CD8-positive, alpha-beta memory T cell (primary cell): ENCODE measurements at regions of chr12 and their contacts with region 1.

Region 1: DNA sequence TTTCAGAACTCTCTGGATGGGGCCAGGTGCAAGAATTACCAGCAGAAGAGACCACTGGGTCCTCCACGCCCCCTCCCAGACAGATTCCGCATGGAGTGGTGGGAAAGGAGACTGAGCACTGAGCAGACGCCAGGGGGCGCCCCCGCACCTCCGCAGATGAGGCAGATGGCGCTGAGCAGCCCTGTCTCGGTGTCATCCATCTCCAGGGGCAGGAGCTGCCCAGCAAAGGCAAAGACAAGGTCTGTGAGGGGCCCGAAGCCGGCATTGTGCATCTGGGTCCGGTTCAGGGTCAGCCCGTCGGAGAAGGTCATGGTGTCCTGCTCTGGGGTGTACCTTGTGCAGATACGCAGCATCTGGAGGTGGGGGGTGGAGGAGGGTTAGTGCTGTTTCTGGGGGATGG is 6.3 kb upstream of the ITGB7 start:
- DNase-seq: peak; percentile 75 to 87 (median 80)
- H3K4me3 ChIP-seq: no peak overlapping the region
- H3K4me3 Mint-ChIP-seq: peak overlapping the region in 2 of 7 donors; percentile 12 to 40
- H3K27ac ChIP-seq: no peak overlapping the region
- H3K27ac Mint-ChIP-seq: peak overlapping the region; percentile 22 to 96 (median 90)
- H3K4me1 ChIP-seq: peaks cover 60% of the 10 kb centered on the region
- H3K4me1 Mint-ChIP-seq: peaks cover 62 to 81% (median 64%) of the 10 kb centered on the region in 3 donors
- H3K27me3 ChIP-seq: no peaks in the 10 kb centered on the region
- H3K27me3 Mint-ChIP-seq: no peaks in the 10 kb centered on the region

Region 2: DNA sequence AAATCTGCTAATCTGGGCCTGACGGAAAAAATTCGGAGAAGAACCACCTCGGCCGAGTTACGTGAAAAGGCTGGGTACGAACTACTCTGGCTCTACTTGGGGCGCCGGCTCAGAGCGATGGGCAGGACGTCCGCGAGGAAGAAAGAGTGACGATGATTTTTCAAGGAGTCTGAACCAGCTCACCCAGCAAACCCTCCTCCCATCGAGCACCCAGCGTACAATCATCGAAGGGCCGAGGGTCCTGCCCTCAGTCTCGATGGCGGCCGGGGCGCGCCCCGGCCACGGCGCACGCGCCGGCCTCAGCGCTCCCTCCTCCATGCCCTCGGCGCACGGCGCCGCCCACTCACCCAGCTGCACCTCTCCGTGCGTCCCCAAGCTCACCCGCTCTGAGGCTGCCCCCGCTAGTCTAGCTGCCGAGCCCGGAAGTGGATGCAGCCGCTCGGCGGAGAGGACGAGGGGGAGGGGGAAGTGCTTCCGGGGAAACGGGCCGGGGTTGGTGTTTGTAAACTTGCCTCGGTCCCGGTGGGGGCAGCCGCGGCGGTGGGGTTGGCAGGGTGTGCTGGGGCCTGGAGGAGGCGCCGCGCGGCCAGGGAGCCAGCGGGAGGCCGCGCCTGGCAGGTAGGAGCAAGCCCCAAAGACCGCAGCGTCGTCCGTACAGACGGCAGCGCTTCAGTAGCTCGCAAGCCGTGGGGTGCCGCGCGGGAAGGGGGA is 33.0 kb before region 1 on chr12 and contains the starts of genes CSAD and ZNF740:
- CTCF ChIA-PET with region 1: interaction called, 18 read pairs
- POLR2A ChIA-PET with region 1: interaction called, 20 read pairs
- DNase-seq: peak; percentile 96 to 99 (median 97)
- H3K4me3 ChIP-seq: peak within 1 kb of the TSS; percentile 79
- H3K4me3 Mint-ChIP-seq: peak within 1 kb of the TSS; percentile 89 to 97 (median 93)
- H3K27ac ChIP-seq: peak within 1 kb of the TSS; percentile 86
- H3K27ac Mint-ChIP-seq: peak within 1 kb of the TSS; percentile 88 to 99 (median 96)
- H3K4me1 ChIP-seq: peaks cover 45% of the 10 kb centered on the region
- H3K4me1 Mint-ChIP-seq: peaks cover 51 to 56% (median 54%) of the 10 kb centered on the region in 3 donors
- H3K27me3 ChIP-seq: no peaks in the 10 kb centered on the region
- H3K27me3 Mint-ChIP-seq: no peaks in the 10 kb centered on the region
- total RNA-seq, gene CSAD: 15.8 to 18.7 TPM
- total RNA-seq, gene ZNF740: 50.4 to 52.0 TPM

Region 3: DNA sequence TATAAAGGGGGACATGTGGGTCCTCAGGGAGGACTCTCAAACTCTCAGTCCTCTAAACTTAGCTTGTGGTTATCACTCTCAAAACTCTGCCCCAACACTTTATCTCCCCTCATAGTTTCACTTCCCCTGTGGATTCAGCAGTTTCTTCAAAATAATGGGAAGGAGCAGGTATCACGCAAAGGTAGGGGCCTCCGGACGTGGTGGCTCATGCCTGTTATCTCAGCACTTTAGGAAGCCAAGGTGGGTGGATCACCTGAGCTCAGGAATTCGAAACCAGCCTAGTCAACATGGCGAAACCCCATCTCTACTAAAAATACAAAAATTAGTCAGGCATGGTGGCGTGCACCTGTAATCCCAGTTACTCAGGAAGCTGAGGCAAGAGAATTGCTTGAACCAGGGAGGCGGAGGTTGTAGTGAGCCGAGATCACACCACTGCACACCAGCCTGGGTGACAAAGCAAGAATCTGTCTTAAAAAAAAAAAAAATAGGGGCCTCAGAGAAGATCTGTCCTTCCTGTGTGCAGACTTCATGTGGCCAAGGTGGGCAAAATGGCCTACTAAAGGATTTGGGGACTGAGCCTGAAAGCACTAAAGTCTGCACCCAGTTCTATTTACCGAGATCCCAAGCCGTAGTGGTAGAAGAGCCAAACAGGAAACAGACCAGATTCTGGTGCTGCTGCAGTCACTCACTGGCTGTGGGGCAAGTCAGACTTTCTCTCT is 12.7 kb before region 1 on chr12:
- CTCF ChIA-PET with region 1: interaction called, 57 read pairs
- POLR2A ChIA-PET with region 1: no interaction called
- DNase-seq: no peak
- H3K4me3 ChIP-seq: peak overlapping the region; percentile 11
- H3K4me3 Mint-ChIP-seq: peak overlapping the region; percentile 57 to 79 (median 75)
- H3K27ac ChIP-seq: peak overlapping the region; percentile 57
- H3K27ac Mint-ChIP-seq: peak overlapping the region; percentile 29 to 94 (median 80)
- H3K4me1 ChIP-seq: peaks cover 90% of the 10 kb centered on the region
- H3K4me1 Mint-ChIP-seq: peaks cover 68 to 86% (median 78%) of the 10 kb centered on the region in 3 donors
- H3K27me3 ChIP-seq: no peaks in the 10 kb centered on the region
- H3K27me3 Mint-ChIP-seq: no peaks in the 10 kb centered on the region

Region 4: DNA sequence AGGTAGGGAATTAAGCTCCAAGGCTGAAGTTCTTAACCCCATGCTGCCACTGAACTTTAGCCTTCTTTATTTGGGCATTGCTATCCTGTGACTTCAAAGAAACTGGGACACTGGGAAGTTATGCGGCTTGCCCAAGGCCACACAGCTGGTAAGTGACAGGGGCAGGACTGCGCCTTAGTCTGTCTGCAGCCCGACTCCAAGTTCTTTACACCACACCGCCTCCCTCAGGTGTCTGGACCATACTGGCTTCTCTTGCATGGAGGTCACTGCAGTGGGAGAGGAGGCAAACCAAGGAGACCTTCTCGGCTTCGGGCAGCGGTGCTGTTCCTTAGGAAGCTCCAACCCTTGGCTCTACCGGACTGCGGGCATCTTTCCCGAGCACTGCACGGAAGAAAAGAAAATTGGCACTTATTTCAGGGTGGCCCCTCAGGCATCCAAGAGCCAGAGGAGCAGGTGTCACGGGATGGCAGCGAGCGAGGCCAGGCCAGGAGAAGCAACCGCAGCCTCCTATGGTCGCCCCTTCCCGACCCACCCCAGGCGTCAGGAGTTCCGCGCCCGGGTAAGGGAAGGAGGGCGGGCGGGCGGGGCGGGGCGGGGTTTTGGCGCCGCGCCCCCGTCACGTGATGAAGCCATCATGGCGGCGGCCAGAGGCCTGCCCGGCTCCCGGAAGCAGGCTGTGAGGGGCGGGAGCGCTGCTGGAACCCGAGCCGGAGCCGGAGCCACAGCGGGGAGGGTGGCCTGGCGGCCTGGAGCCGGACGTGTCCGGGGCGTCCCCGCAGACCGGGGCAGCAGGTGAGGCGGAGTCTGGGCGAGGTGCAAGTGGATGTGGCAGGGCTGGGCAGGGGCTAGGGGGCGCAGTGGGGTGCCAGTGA is 38.4 kb after region 1 on chr12:
- CTCF ChIA-PET with region 1: interaction called, 166 read pairs
- POLR2A ChIA-PET with region 1: interaction called, 4 read pairs
- DNase-seq: peak; percentile 68 to 84 (median 69)
- H3K4me3 ChIP-seq: peak overlapping the region; percentile 83
- H3K4me3 Mint-ChIP-seq: peak overlapping the region; percentile 97 to 99 (median 99)
- H3K27ac ChIP-seq: peak overlapping the region; percentile 73
- H3K27ac Mint-ChIP-seq: peak overlapping the region; percentile 90 to 100 (median 98)
- H3K4me1 ChIP-seq: peaks cover 41% of the 10 kb centered on the region
- H3K4me1 Mint-ChIP-seq: peaks cover 32 to 46% (median 46%) of the 10 kb centered on the region in 3 donors
- H3K27me3 ChIP-seq: no peaks in the 10 kb centered on the region
- H3K27me3 Mint-ChIP-seq: peaks cover 0 to 1% of the 10 kb centered on the region in 2 donors

Region 5: DNA sequence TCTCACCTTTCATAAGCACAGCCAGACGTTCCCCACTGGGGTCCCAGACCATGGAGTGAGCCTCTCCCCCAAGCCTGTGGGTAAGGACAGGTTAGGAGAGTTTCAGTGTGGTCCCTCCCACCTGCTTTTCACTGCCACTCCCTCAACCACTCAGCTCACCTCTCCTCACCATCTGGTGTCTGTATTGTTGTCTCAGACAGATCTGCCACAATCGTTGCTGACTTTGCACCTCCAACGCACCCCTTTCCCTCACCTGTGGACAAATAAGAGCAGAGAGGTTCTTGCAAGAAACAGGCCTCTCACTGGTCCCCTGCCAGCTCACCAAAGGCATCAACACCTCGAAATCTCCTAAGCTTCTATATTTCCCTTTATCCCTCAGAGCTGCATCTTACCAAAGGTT is 94.9 kb after region 1 on chr12:
- CTCF ChIA-PET with region 1: no interaction called
- POLR2A ChIA-PET with region 1: no interaction called
- DNase-seq: no peak
- H3K4me3 ChIP-seq: no peak overlapping the region
- H3K4me3 Mint-ChIP-seq: no peak overlapping the region
- H3K27ac ChIP-seq: no peak overlapping the region
- H3K27ac Mint-ChIP-seq: peak overlapping the region in 3 of 8 donors; percentile 36 to 84 (median 54)
- H3K4me1 ChIP-seq: no peaks in the 10 kb centered on the region
- H3K4me1 Mint-ChIP-seq: peaks cover 2 to 3% (median 2%) of the 10 kb centered on the region in 3 donors
- H3K27me3 ChIP-seq: no peaks in the 10 kb centered on the region
- H3K27me3 Mint-ChIP-seq: no peaks in the 10 kb centered on the region

Region 6: GRCh38 chr12:53344824-53345485 is 131.6 kb after region 1 on chr12:
- CTCF ChIA-PET with region 1: interaction called, 26 read pairs
- POLR2A ChIA-PET with region 1: no interaction called
- DNase-seq: peak; percentile 53 to 80 (median 61)
- H3K4me3 ChIP-seq: peak overlapping the region; percentile 80
- H3K4me3 Mint-ChIP-seq: peak overlapping the region; percentile 90 to 98 (median 95)
- H3K27ac ChIP-seq: peak overlapping the region; percentile 4
- H3K27ac Mint-ChIP-seq: peak overlapping the region in 7 of 8 donors; percentile 75 to 95 (median 92)
- H3K4me1 ChIP-seq: peaks cover 9% of the 10 kb centered on the region
- H3K4me1 Mint-ChIP-seq: peaks cover 12 to 18% (median 14%) of the 10 kb centered on the region in 3 donors
- H3K27me3 ChIP-seq: no peaks in the 10 kb centered on the region
- H3K27me3 Mint-ChIP-seq: peaks cover 6 to 7% of the 10 kb centered on the region in 2 donors

Region 7: GRCh38 chr12:53907103-53907502 is 693.8 kb after region 1 on chr12:
- CTCF ChIA-PET with region 1: no interaction called
- POLR2A ChIA-PET with region 1: no interaction called
- DNase-seq: no peak
- H3K4me3 ChIP-seq: no peak overlapping the region
- H3K4me3 Mint-ChIP-seq: no peak overlapping the region
- H3K27ac ChIP-seq: no peak overlapping the region
- H3K27ac Mint-ChIP-seq: no peak overlapping the region
- H3K4me1 ChIP-seq: no peaks in the 10 kb centered on the region
- H3K4me1 Mint-ChIP-seq: no peaks in the 10 kb centered on the region
- H3K27me3 ChIP-seq: peaks cover 4% of the 10 kb centered on the region
- H3K27me3 Mint-ChIP-seq: peaks cover 18 to 35% of the 10 kb centered on the region in 2 donors